CD8-positive, alpha-beta T cell (primary cell): ENCODE measurements at regions of chr3 and their contacts with region 1.

Region 1: GRCh38 chr3:133487920-133488540 is 85.5 kb upstream of the CDV3 start:
- DNase-seq: peak in 8 of 9 experiments; percentile 45 to 79 (median 71)
- ATAC-seq: no peak
- H3K4me3 ChIP-seq: no peak overlapping the region
- H3K4me3 Mint-ChIP-seq: no peak overlapping the region
- H3K27ac ChIP-seq: no peak overlapping the region
- H3K27ac Mint-ChIP-seq: peak overlapping the region; percentile 96
- H3K4me1 ChIP-seq: peaks cover 50% of the 10 kb centered on the region
- H3K4me1 Mint-ChIP-seq: peaks cover 59% of the 10 kb centered on the region
- H3K27me3 ChIP-seq: no peaks in the 10 kb centered on the region
- H3K27me3 Mint-ChIP-seq: no peaks in the 10 kb centered on the region
- CTCF ChIP-seq: peak; percentile 88

Region 2: GRCh38 chr3:132803889-132804288 is 684.1 kb before region 1 on chr3:
- CTCF ChIA-PET with region 1: no interaction called
- POLR2A ChIA-PET with region 1: no interaction called
- intact Hi-C with region 1: no loop called
- DNase-seq: no peak
- ATAC-seq: no peak
- H3K4me3 ChIP-seq: no peak overlapping the region
- H3K4me3 Mint-ChIP-seq: no peak overlapping the region
- H3K27ac ChIP-seq: no peak overlapping the region
- H3K27ac Mint-ChIP-seq: no peak overlapping the region
- H3K4me1 ChIP-seq: no peaks in the 10 kb centered on the region
- H3K4me1 Mint-ChIP-seq: no peaks in the 10 kb centered on the region
- H3K27me3 ChIP-seq: no peaks in the 10 kb centered on the region
- H3K27me3 Mint-ChIP-seq: no peaks in the 10 kb centered on the region
- CTCF ChIP-seq: no peak

Region 3: DNA sequence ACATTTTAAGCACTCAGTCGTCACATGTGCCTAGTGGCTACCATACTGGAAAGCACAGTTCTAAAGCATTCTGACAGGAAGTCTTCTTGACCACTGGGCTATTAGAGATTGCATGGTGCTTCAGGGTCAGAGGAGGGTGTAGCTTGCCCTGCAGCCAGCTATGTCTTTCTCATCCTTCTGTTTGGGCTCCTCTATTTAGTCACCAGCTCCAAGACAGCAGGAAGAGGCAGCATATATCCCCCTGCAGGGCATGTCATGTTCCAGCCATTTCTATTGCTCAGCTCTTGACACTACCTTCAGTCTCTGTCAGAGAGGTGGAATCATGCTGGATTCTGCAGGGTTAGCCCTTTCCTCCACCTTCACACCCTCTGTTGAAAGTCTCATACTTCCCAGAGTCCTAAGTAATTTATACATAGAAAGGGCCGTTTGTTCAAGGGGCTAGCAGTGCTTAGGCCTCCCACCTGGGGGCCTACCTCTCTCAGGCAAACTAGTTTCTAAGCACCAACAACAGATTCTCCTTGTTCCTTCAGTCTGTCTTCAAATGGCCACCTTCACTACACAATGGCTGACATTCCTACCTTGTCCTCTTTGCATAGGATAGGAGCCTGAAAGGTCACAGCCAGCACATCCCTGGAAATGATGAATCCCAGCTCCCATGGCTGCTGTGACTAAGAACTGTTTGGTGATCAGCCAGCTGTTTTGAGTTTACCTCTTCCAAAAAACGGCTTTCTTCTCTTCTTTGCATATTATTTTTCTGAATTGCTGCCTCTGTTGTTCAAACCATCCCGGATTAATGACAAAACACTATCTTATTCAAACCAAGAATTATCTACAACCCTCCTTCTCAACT is 203.8 kb before region 1 on chr3:
- CTCF ChIA-PET with region 1: no interaction called
- POLR2A ChIA-PET with region 1: no interaction called
- intact Hi-C with region 1: no loop called
- DNase-seq: no peak
- ATAC-seq: no peak
- H3K4me3 ChIP-seq: no peak overlapping the region
- H3K4me3 Mint-ChIP-seq: no peak overlapping the region
- H3K27ac ChIP-seq: no peak overlapping the region
- H3K27ac Mint-ChIP-seq: no peak overlapping the region
- H3K4me1 ChIP-seq: no peaks in the 10 kb centered on the region
- H3K4me1 Mint-ChIP-seq: no peaks in the 10 kb centered on the region
- H3K27me3 ChIP-seq: no peaks in the 10 kb centered on the region
- H3K27me3 Mint-ChIP-seq: peaks cover 6% of the 10 kb centered on the region
- CTCF ChIP-seq: no peak

Region 4: GRCh38 chr3:133506215-133506901 is 18.3 kb after region 1 on chr3:
- CTCF ChIA-PET with region 1: interaction called, 13 read pairs
- POLR2A ChIA-PET with region 1: interaction called, 5 read pairs
- intact Hi-C with region 1: loop called in 1 of 2 experiments (anchors 2 kb)
- DNase-seq: peak in 4 of 9 experiments; percentile 23 to 70 (median 56)
- ATAC-seq: peak; percentile 94
- H3K4me3 ChIP-seq: peak overlapping the region; percentile 9 to 30
- H3K4me3 Mint-ChIP-seq: peak overlapping the region; percentile 74
- H3K27ac ChIP-seq: peak overlapping the region; percentile 30 to 69
- H3K27ac Mint-ChIP-seq: peak overlapping the region; percentile 88
- H3K4me1 ChIP-seq: peaks cover 13% of the 10 kb centered on the region
- H3K4me1 Mint-ChIP-seq: peaks cover 16% of the 10 kb centered on the region
- H3K27me3 ChIP-seq: no peaks in the 10 kb centered on the region
- H3K27me3 Mint-ChIP-seq: no peaks in the 10 kb centered on the region
- CTCF ChIP-seq: no peak

Region 5: GRCh38 chr3:133578548-133579191 is 90.6 kb after region 1 on chr3:
- CTCF ChIA-PET with region 1: interaction called, 110 read pairs
- POLR2A ChIA-PET with region 1: interaction called, 72 read pairs
- intact Hi-C with region 1: loop called (anchors 1 kb)
- DNase-seq: peak in 2 of 9 experiments; percentile 18 to 40
- ATAC-seq: no peak
- H3K4me3 ChIP-seq: peak overlapping the region in 1 of 2 experiments; percentile 15
- H3K4me3 Mint-ChIP-seq: peak overlapping the region; percentile 75
- H3K27ac ChIP-seq: no peak overlapping the region
- H3K27ac Mint-ChIP-seq: peak overlapping the region; percentile 81
- H3K4me1 ChIP-seq: peaks cover 63% of the 10 kb centered on the region
- H3K4me1 Mint-ChIP-seq: peaks cover 82% of the 10 kb centered on the region
- H3K27me3 ChIP-seq: no peaks in the 10 kb centered on the region
- H3K27me3 Mint-ChIP-seq: no peaks in the 10 kb centered on the region
- CTCF ChIP-seq: peak; percentile 57

Region 6: GRCh38 chr3:133805527-133806475 is 317.8 kb after region 1 on chr3 and contains the start of gene SRPRB:
- CTCF ChIA-PET with region 1: no interaction called
- POLR2A ChIA-PET with region 1: no interaction called
- intact Hi-C with region 1: loop called (anchors 5 kb)
- DNase-seq: peak; percentile 92 to 98 (median 95)
- ATAC-seq: peak; percentile 94
- H3K4me3 ChIP-seq: peak within 1 kb of the TSS; percentile 81 to 91
- H3K4me3 Mint-ChIP-seq: peak within 1 kb of the TSS; percentile 97
- H3K27ac ChIP-seq: peak within 1 kb of the TSS; percentile 77 to 81
- H3K27ac Mint-ChIP-seq: peak within 1 kb of the TSS; percentile 96
- H3K4me1 ChIP-seq: peaks cover 18% of the 10 kb centered on the region
- H3K4me1 Mint-ChIP-seq: peaks cover 37% of the 10 kb centered on the region
- H3K27me3 ChIP-seq: no peaks in the 10 kb centered on the region
- H3K27me3 Mint-ChIP-seq: peaks cover 4% of the 10 kb centered on the region
- CTCF ChIP-seq: no peak
- total RNA-seq, gene SRPRB: 25.7 to 30.1 TPM

Region 7: GRCh38 chr3:133927540-133928066 is 439.6 kb after region 1 on chr3:
- CTCF ChIA-PET with region 1: interaction called, 3 read pairs
- POLR2A ChIA-PET with region 1: no interaction called
- intact Hi-C with region 1: loop called in 1 of 2 experiments (anchors 5 kb)
- DNase-seq: peak; percentile 57 to 89 (median 79)
- ATAC-seq: peak; percentile 98
- H3K4me3 ChIP-seq: peak overlapping the region; percentile 43 to 67
- H3K4me3 Mint-ChIP-seq: peak overlapping the region; percentile 73
- H3K27ac ChIP-seq: no peak overlapping the region
- H3K27ac Mint-ChIP-seq: no peak overlapping the region
- H3K4me1 ChIP-seq: peaks cover 13% of the 10 kb centered on the region
- H3K4me1 Mint-ChIP-seq: peaks cover 14% of the 10 kb centered on the region
- H3K27me3 ChIP-seq: peaks cover 0 to 4% of the 10 kb centered on the region in 2 experiments
- H3K27me3 Mint-ChIP-seq: peaks cover 8% of the 10 kb centered on the region
- CTCF ChIP-seq: peak; percentile 76